ENCODE measurements at regions of chr15 and their contacts with region 1.

Region 1: GRCh38 chr15:50145451-50145872 is 26.4 kb upstream of the ATP8B4 start:
- DNase-seq: peak; percentile 63
- H3K4me3 ChIP-seq: no peak overlapping the region
- H3K27ac ChIP-seq: no peak overlapping the region
- H3K4me1 ChIP-seq: peaks cover 10% of the 10 kb centered on the region
- H3K27me3 ChIP-seq: no peaks in the 10 kb centered on the region
- CTCF ChIP-seq: peak; percentile 33 to 48

Region 2: DNA sequence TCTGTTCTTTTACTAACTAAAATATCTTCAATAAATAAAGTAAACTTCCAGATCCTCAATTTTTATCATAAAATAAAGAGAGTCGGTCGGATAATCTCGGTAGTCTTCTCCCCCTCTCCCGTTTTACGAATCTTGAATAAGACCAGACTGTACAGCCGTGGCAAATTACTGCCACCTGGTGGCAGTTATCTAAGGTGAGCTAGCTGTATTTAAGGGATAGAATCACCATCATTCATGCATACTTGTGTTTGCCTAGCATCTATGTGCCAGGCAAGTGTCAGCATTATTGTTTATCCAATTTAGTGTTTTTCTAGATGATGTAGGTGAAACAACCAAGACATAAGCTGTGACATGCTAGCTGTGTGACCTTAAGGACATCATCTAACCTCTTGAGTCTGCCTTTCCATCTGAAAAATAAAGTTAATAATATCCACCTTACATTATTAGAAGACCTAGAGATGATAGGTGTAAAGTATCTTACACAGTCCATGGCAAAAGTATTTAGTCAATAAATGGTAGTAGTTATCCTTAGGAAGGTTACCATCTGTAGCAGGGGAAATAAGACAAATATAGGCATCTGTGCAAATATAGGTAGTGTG is 1792.9 kb before region 1 on chr15:
- CTCF ChIA-PET with region 1: no interaction called
- dilution Hi-C with region 1: no loop called
- in situ Hi-C with region 1: no loop called
- intact Hi-C with region 1: loop called (anchors 10 kb)
- DNase-seq: peak; percentile 47
- H3K4me3 ChIP-seq: no peak overlapping the region
- H3K27ac ChIP-seq: no peak overlapping the region
- H3K4me1 ChIP-seq: no peaks in the 10 kb centered on the region
- H3K27me3 ChIP-seq: no peaks in the 10 kb centered on the region
- CTCF ChIP-seq: peak; percentile 78 to 84

Region 3: GRCh38 chr15:49235446-49236124 is 909.9 kb before region 1 on chr15:
- CTCF ChIA-PET with region 1: interaction called, 5 read pairs
- dilution Hi-C with region 1: no loop called
- in situ Hi-C with region 1: no loop called
- intact Hi-C with region 1: loop called (anchors 10 kb)
- DNase-seq: peak; percentile 43
- H3K4me3 ChIP-seq: no peak overlapping the region
- H3K27ac ChIP-seq: no peak overlapping the region
- H3K4me1 ChIP-seq: no peaks in the 10 kb centered on the region
- H3K27me3 ChIP-seq: no peaks in the 10 kb centered on the region
- CTCF ChIP-seq: peak; percentile 79 to 82

Region 4: DNA sequence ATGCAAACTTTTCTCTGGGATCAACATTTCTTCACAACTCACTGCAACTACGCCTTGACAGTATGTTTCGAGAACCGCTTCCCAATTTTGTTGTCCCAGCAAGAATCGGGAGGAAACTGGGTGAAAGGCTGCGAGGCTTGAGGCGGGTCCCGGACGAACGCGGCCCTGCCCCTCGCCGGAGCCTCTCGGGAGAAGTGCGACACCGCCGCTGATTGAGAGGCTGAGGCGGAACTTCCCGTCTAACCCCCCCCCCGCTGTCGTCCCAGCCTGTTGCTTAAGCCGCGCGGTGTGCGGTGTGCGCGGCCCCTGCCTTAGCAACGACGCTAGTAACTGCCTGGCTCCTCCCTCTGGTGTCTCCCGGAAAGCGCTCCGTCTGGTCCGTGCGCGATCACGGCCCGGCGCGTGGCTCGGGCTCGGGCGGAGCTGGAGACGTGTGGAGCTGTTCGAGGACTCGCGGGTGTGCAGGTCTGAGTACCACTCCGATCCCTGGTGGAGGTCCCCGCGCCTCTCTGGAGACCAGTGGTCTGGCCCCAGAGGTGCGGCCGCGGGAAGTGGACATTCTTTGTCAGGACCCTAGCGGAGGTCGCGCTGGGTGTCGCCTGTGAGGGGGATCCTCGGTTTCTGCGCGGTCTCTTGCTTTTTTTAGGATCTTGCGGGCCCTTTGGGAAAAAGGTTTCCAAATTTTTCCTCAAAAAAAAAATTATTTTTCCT is 524.6 kb before region 1 on chr15 and contains the starts of genes DTWD1 and FAM227B:
- CTCF ChIA-PET with region 1: no interaction called
- dilution Hi-C with region 1: no loop called
- in situ Hi-C with region 1: no loop called
- intact Hi-C with region 1: loop called (anchors 10 kb)
- DNase-seq: peak; percentile 97
- H3K4me3 ChIP-seq: peak within 1 kb of the TSS; percentile 88 to 96 (median 92)
- H3K27ac ChIP-seq: peak within 1 kb of the TSS; percentile 87
- H3K4me1 ChIP-seq: peaks cover 27% of the 10 kb centered on the region
- H3K27me3 ChIP-seq: no peaks in the 10 kb centered on the region
- CTCF ChIP-seq: no peak
- total RNA-seq, gene DTWD1: 23.2 to 24.2 TPM
- total RNA-seq, gene FAM227B: 5.0 to 5.4 TPM

Region 5: DNA sequence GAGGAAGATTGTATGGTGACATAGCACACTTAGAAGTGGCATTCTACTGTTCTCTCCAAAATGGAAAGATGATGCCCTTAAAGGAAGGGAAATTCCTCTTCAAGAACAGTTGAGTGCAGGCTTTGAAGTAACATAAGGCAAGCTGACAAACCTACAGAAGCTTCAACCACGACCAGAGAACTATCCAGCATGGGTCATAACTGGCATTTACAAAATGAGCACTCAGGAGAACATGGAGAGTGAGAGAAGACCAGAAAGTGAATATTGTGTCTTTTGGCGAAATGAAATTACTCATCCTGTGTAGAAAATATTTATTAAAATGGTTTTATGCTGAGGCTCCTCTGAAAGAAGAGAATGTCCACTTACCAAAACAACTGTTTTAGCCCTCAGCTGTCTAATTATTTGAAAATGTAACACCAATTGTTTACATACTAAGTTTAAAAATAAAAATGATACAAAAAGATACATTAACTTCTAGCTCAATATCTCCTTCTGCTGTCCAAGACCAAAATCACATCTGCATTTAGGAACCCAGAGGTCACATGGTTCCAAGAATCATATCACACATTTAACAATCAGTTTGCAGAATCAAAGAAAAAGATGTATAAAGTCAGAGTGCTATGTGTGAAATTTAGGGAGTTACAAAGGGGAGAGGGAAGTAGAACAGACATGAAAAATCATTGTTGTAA is 243.3 kb before region 1 on chr15:
- CTCF ChIA-PET with region 1: interaction called, 4 read pairs
- dilution Hi-C with region 1: no loop called
- in situ Hi-C with region 1: no loop called
- intact Hi-C with region 1: loop called (anchors 10 kb)
- DNase-seq: peak; percentile 5
- H3K4me3 ChIP-seq: no peak overlapping the region
- H3K27ac ChIP-seq: no peak overlapping the region
- H3K4me1 ChIP-seq: no peaks in the 10 kb centered on the region
- H3K27me3 ChIP-seq: no peaks in the 10 kb centered on the region
- CTCF ChIP-seq: peak; percentile 14 to 42

Region 6: GRCh38 chr15:50302581-50302980 is 157.1 kb after region 1 on chr15:
- CTCF ChIA-PET with region 1: no interaction called
- dilution Hi-C with region 1: loop called (anchors 10 kb)
- in situ Hi-C with region 1: no loop called
- intact Hi-C with region 1: no loop called
- DNase-seq: no peak
- H3K4me3 ChIP-seq: no peak overlapping the region
- H3K27ac ChIP-seq: no peak overlapping the region
- H3K4me1 ChIP-seq: no peaks in the 10 kb centered on the region
- H3K27me3 ChIP-seq: no peaks in the 10 kb centered on the region
- CTCF ChIP-seq: no peak

Region 7: GRCh38 chr15:50321680-50322210 is 176.3 kb after region 1 on chr15:
- CTCF ChIA-PET with region 1: no interaction called
- dilution Hi-C with region 1: no loop called
- in situ Hi-C with region 1: loop called (anchors 5 kb)
- intact Hi-C with region 1: loop called (anchors 1 kb)
- DNase-seq: no peak
- H3K4me3 ChIP-seq: no peak overlapping the region
- H3K27ac ChIP-seq: no peak overlapping the region
- H3K4me1 ChIP-seq: no peaks in the 10 kb centered on the region
- H3K27me3 ChIP-seq: no peaks in the 10 kb centered on the region
- CTCF ChIP-seq: no peak

Measured in mammary epithelial cell (primary cell).